ENCODE measurements at regions of chr20 and their contacts with region 1.

Region 1: GRCh38 chr20:297098-297924 is at the start of gene ZCCHC3:
- DNase-seq: peak; percentile 86 to 92 (median 90)
- ATAC-seq: peak; percentile 83 to 93 (median 90)
- H3K4me3 ChIP-seq: peak within 1 kb of the TSS; percentile 66 to 99 (median 87)
- H3K27ac ChIP-seq: peak within 1 kb of the TSS; percentile 96 to 100 (median 99)
- H3K4me1 ChIP-seq: peaks cover 13 to 53% (median 36%) of the 10 kb centered on the region in 12 donors
- H3K27me3 ChIP-seq: no peaks in the 10 kb centered on the region
- CTCF ChIP-seq: peak in 5 of 12 donors; percentile 15 to 43 (median 27)
- POLR2A ChIP-seq: peak in 1 of 2 donors; percentile 28
- total RNA-seq, gene ZCCHC3: 6.9 to 15.3 (median 11.4) TPM

Region 2: DNA sequence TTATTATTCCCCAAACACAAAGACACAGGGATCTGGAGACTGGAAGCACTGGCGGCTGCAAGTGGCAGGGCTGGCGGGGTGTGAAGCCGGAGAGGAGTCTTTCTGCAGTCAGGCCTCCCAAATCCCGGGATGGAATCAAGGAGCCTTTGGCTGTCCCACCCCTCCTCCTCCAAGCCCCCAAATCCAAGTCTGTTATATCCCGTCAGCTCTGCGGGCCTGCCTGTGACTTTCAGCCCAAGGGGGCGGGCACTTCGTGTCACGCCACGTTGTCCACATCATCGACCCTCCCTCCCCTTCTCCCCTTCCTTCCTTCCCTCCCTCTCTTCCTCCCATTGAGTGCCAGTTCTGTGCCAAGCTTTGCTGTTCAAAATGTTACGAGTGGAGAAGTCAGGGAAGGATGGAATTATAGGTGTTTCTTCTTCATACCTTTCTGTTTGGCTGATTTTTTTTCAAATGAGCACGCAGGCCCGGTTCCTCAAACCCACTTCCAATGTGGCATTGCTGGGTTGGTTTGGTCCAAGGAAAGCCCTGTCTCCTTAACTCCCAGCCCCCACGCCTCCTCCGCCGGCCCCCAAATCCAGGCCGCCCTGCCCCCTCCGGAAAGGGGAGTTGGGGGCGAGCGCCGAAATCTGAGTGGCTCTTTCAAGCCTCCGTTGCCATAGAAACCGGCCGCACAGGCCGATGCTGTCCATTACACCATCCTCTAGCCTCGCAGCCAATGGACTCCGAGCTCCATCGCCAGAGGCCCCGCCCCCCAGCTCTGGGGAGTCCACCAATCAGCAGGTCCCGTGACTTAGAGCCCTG is 12.7 kb after region 1 on chr20:
- intact Hi-C with region 1: loop called in 1 of 10 experiments (anchors 1 kb)
- DNase-seq: peak; percentile 98 to 99 (median 99)
- ATAC-seq: peak; percentile 99 to 100 (median 100)
- H3K4me3 ChIP-seq: peak overlapping the region; percentile 12 to 68 (median 59)
- H3K27ac ChIP-seq: peak overlapping the region in 11 of 12 donors; percentile 67 to 90 (median 81)
- H3K4me1 ChIP-seq: peaks cover 0 to 22% (median 15%) of the 10 kb centered on the region in 12 donors
- H3K27me3 ChIP-seq: no peaks in the 10 kb centered on the region
- CTCF ChIP-seq: no peak
- POLR2A ChIP-seq: no peak

Region 3: DNA sequence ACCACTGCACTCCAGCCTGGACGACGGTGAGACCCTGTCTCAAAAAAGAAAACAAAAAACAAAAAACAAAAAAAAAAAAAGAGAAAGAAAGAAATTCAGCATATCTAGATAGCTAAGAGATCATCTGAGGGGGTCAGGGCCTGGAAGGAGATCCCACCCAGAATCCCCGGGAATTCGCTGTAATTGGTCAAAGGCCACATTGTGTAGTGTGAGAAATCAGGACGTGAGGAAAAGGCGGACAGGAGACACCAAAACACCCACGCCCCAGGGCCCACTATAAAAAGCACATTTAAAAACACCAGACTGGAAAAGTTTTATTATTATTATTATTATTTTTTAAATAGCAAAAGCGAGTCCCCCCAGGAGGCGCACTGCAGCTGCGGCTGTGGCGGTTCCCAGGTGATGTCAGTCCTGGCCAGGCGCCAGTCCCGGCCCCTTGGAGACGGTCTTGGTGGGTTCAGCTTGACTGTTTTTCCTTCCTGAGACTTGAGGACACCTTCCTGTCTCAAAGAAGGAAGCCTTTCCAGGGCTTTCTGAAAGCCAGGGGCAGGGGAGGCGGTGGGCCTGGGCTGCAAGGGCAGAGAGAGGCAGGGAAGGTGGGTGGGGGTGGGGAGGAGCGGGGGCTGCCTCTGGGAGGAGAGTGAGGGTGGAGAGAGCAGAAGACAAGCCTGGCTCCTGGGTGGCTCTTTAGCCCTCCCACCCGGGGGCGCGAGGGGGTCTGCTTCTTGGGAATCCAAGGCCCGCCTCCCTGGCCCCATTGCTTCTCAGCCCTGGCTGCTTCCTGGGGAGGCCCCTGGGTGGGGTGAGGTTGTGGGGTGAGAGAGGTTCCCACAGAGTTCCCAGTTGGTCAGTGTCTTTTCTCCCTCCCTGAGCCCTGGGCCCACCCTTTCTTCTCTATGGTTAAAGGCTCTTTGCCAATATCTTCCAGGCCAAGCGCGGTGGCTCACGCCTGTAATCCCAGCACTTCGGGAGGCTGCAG is 298.3 kb after region 1 on chr20:
- intact Hi-C with region 1: no loop called
- DNase-seq: peak; percentile 84 to 90 (median 90)
- ATAC-seq: peak; percentile 58 to 91 (median 68)
- H3K4me3 ChIP-seq: peak overlapping the region in 3 of 12 donors; percentile 1 to 15 (median 6)
- H3K27ac ChIP-seq: peak overlapping the region; percentile 42 to 94 (median 81)
- H3K4me1 ChIP-seq: peaks cover 0 to 32% (median 11%) of the 10 kb centered on the region in 12 donors
- H3K27me3 ChIP-seq: no peaks in the 10 kb centered on the region
- CTCF ChIP-seq: peak in 8 of 12 donors; percentile 20 to 60 (median 30)
- POLR2A ChIP-seq: no peak

Measured in heart left ventricle (tissue), 16 donors.